GM12878 (cell line): ENCODE measurements at regions of chr1 and their contacts with region 1.

Region 1: DNA sequence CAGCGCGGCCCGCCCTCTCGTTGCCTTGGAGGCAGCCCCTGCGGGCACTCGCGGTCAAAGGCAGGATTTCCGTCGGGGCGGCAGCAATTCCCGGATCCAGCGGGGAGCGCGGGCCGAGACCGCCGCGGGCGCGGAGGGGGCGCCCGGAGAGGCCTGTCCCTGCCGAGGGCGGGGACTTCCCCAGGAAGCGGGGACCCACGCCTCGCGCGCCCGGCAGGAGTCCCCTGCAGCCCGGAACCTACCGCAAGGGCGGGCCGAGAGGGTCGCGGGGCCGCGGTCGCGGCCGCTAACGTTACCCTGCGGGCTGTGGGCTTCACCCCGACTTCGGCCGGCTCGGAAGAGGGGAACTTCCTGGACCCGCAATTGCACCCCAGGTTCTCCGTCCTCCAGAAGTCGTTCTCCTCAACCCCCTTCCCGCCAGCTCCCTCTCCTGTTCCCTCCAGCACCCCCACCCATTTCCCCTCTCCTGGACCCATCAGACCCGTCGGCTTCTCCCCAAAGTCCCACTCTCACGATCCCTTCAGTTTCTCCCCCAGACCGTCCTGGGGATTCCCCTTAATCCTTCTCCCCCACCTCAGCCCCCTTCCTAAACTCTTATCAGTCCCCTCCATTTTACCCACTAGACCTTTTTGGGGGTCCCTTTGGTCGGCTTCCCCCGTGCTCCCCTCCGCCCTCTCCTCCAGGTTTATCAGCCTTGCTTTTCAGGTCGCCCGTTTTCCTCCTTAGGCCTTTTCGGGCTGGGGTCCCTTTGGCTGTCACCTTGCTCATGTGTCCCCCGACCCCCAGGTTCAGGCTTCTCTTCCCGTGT is 604 bp downstream of the FGR start:
- DNase-seq: no peak
- ATAC-seq: peak; percentile 5
- H3K4me3 ChIP-seq: peak overlapping the region; percentile 66
- H3K27ac ChIP-seq: peak overlapping the region; percentile 95
- H3K4me1 ChIP-seq: peaks cover 69% of the 10 kb centered on the region
- H3K27me3 ChIP-seq: no peaks in the 10 kb centered on the region
- CTCF ChIP-seq: no peak
- EP300 ChIP-seq: 0 out of 4 replicates have a peak, but pooled peaks of 1 of the 2 experiments have one; percentile 22
- POLR2A ChIP-seq: peak; percentile 52
- RAD21 ChIP-seq: no peak

Region 2: GRCh38 chr1:27589841-27590426 is 44.4 kb before region 1 on chr1:
- CTCF ChIA-PET with region 1: no interaction called
- POLR2A ChIA-PET with region 1: no interaction called
- RAD21 ChIA-PET with region 1: no interaction called
- SMC1A ChIA-PET with region 1: no interaction called
- in situ Hi-C with region 1: no loop called
- intact Hi-C with region 1: no loop called
- DNase-seq: no peak
- ATAC-seq: no peak
- H3K4me3 ChIP-seq: no peak overlapping the region
- H3K27ac ChIP-seq: no peak overlapping the region
- H3K4me1 ChIP-seq: no peaks in the 10 kb centered on the region; the same call in 1 of the 2 replicates
- H3K27me3 ChIP-seq: no peaks in the 10 kb centered on the region
- CTCF ChIP-seq: no peak
- EP300 ChIP-seq: no peak
- POLR2A ChIP-seq: no peak
- RAD21 ChIP-seq: no peak

Region 3: GRCh38 chr1:27609210-27609555 is 25.2 kb before region 1 on chr1:
- CTCF ChIA-PET with region 1: interaction called, 208 read pairs
- POLR2A ChIA-PET with region 1: interaction called, 50 read pairs
- RAD21 ChIA-PET with region 1: interaction called, 183 read pairs
- SMC1A ChIA-PET with region 1: interaction called, 71 read pairs
- in situ Hi-C with region 1: no loop called
- intact Hi-C with region 1: loop called (anchors 1 kb)
- DNase-seq: no peak
- ATAC-seq: peak; percentile 41
- H3K4me3 ChIP-seq: no peak overlapping the region
- H3K27ac ChIP-seq: peak overlapping the region; percentile 78
- H3K4me1 ChIP-seq: peaks cover 46% of the 10 kb centered on the region
- H3K27me3 ChIP-seq: no peaks in the 10 kb centered on the region
- CTCF ChIP-seq: no peak
- EP300 ChIP-seq: no peak
- POLR2A ChIP-seq: peak; percentile 57; the same call in 1 of the 2 replicates
- RAD21 ChIP-seq: no peak

Region 4: GRCh38 chr1:27616441-27616840 is 17.9 kb before region 1 on chr1:
- CTCF ChIA-PET with region 1: interaction called, 208 read pairs
- POLR2A ChIA-PET with region 1: interaction called, 68 read pairs
- RAD21 ChIA-PET with region 1: interaction called, 183 read pairs
- SMC1A ChIA-PET with region 1: interaction called, 71 read pairs
- in situ Hi-C with region 1: no loop called
- intact Hi-C with region 1: no loop called
- DNase-seq: no peak
- ATAC-seq: no peak
- H3K4me3 ChIP-seq: no peak overlapping the region
- H3K27ac ChIP-seq: no peak overlapping the region
- H3K4me1 ChIP-seq: peaks cover 18% of the 10 kb centered on the region
- H3K27me3 ChIP-seq: no peaks in the 10 kb centered on the region
- CTCF ChIP-seq: peak; percentile 23 to 31 (median 29); a peak in 4 of 6 replicates
- EP300 ChIP-seq: no peak
- POLR2A ChIP-seq: peak; percentile 38; the same call in 1 of the 2 replicates
- RAD21 ChIP-seq: peak; percentile 10; the same call in 1 of the 2 replicates

Region 5: DNA sequence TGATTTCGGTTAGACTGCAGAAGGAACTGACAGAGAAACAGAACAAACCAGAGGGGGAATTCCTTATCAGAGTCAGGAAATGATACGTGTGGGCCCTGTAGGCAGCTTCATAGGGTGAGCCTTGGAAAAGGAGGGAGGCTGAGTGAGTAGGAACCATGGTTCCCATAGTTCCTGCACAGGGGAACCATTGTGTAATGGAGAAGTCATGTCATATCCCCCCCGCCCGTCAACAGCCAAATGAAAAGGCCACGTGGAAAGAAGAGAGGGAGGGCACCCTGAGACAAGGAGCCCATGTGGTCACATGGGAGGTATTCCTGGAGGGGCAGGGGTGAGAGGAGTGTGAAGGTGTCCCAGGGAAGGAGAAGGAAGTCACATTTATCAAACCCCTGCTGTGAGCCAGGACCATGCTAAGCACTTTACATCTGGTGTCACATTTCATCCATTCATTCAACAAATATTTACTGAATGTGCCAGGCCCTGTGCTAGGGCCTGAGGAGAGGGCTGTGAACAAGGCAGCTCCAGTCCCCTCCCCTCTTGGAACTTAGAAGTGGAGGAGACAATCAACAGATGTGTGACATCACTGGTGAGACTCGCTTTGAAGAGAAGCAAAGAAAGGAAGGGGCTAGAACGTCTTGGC is 16.3 kb after region 1 on chr1:
- CTCF ChIA-PET with region 1: interaction called, 31 read pairs
- POLR2A ChIA-PET with region 1: interaction called, 89 read pairs
- RAD21 ChIA-PET with region 1: interaction called, 10 read pairs
- SMC1A ChIA-PET with region 1: interaction called, 66 read pairs
- in situ Hi-C with region 1: no loop called
- intact Hi-C with region 1: no loop called
- DNase-seq: no peak
- ATAC-seq: peak; percentile 38
- H3K4me3 ChIP-seq: no peak overlapping the region
- H3K27ac ChIP-seq: peak overlapping the region; percentile 24
- H3K4me1 ChIP-seq: peaks cover 30% of the 10 kb centered on the region
- H3K27me3 ChIP-seq: no peaks in the 10 kb centered on the region
- CTCF ChIP-seq: no peak
- EP300 ChIP-seq: no peak
- POLR2A ChIP-seq: no peak
- RAD21 ChIP-seq: no peak

Region 6: DNA sequence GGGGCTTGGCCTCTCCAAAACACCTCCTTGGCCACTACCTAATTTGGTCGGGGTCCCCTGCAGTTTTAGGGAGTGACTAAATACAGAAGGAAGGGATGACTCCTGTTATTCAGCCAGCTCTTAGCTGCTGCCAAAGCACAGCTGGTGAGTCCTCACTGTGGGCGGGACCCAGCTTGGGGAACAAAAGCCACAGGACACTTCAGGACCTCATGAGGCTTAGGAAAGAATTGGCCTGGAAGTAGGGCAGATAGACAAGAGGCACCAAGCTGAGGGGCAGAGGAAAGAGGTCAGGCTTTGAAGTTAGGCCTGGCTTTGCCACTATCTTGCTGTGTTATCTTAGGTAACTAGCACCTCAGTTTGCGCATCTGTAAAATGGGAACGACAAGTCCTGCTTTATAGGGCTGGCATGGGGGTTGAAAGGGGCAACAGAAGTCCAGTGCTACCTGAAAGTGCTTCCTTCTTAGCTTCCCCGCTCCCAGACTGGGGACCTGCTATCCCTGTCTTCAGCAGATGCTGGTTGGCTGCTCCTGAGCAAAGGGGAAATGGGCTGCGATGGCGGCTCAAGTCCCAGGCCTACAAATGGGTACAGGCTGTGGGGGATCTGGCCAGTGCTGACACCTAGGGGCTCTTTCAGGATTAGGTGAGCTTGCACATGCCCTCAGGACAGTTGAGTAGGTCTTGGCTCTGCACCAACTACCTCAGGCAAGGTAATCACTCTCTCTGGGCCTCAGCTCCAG is 21.9 kb after region 1 on chr1:
- CTCF ChIA-PET with region 1: interaction called, 97 read pairs
- POLR2A ChIA-PET with region 1: interaction called, 141 read pairs
- RAD21 ChIA-PET with region 1: interaction called, 211 read pairs
- SMC1A ChIA-PET with region 1: interaction called, 87 read pairs
- in situ Hi-C with region 1: no loop called
- intact Hi-C with region 1: loop called (anchors 1 kb)
- DNase-seq: no peak
- ATAC-seq: no peak
- H3K4me3 ChIP-seq: no peak overlapping the region
- H3K27ac ChIP-seq: peak overlapping the region; percentile 42; the same call in 1 of the 2 replicates
- H3K4me1 ChIP-seq: peaks cover 61% of the 10 kb centered on the region
- H3K27me3 ChIP-seq: no peaks in the 10 kb centered on the region
- CTCF ChIP-seq: peak; percentile 1 to 21 (median 17); a peak in 1 of 6 replicates
- EP300 ChIP-seq: no peak
- POLR2A ChIP-seq: no peak
- RAD21 ChIP-seq: no peak